ENCODE measurements at regions of chr22 and their contacts with region 1.

Region 1: DNA sequence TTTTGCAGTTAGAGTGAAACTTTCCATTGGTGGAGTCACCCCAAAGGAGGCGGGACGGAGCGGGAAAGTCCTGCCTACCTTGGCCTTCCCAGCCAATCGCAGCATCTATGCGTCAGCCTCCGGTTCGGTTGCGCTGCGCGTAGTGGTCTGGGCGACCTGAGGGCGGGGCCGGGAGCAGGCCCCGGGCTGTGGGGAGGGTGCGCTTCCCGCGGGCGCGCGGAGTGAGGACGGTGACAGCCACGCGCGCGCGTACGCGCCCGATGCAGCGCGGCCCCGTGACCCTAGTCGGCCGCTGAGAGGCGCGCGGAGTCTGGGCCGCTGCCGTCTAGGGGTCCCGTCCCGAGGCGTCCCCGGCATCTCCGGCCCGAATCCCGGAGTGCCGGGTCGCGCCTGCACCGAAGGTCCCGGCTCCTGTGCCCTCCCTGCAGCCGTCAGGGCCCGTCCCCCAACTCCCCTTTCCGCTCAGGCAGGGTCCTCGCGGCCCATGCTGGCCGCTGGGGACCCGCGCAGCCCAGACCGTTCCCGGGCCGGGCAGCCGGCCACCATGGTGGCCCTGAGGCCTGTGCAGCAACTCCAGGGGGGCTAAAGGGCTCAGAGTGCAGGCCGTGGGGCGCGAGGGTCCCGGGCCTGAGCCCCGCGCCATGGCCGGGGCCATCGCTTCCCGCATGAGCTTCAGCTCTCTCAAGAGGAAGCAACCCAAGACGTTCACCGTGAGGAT is at the start of gene NF2:
- DNase-seq: peak; percentile 99
- H3K4me3 ChIP-seq: peak within 1 kb of the TSS; percentile 75 to 77
- H3K27ac ChIP-seq: peak within 1 kb of the TSS; percentile 73 to 79
- H3K4me1 ChIP-seq: peaks cover 3 to 11% of the 10 kb centered on the region in 2 experiments; a peak in 2 of 4 replicates
- H3K27me3 ChIP-seq: no peaks in the 10 kb centered on the region
- CTCF ChIP-seq: peak; percentile 20; the same call in 1 of the 2 replicates
- EP300 ChIP-seq: peak in 1 of 2 experiments; percentile 25; a peak in 1 of 4 replicates
- RAD21 ChIP-seq: no peak
- polyA plus RNA-seq, gene NF2: 43.8 and 44.1 TPM in 2 replicates

Region 2: GRCh38 chr22:29587938-29588699 is 15.4 kb before region 1 on chr22:
- CTCF ChIA-PET with region 1: interaction called, 27 read pairs
- POLR2A ChIA-PET with region 1: no interaction called
- DNase-seq: no peak
- H3K4me3 ChIP-seq: no peak overlapping the region
- H3K27ac ChIP-seq: peak overlapping the region in 1 of 2 experiments; percentile 34; a peak in 1 of 4 replicates
- H3K4me1 ChIP-seq: no peaks in the 10 kb centered on the region
- H3K27me3 ChIP-seq: no peaks in the 10 kb centered on the region
- CTCF ChIP-seq: no peak
- EP300 ChIP-seq: 0 out of 4 replicates have a peak, but pooled peaks of 1 of the 2 experiments have one; percentile 3
- RAD21 ChIP-seq: no peak

Measured in SK-N-SH (cell line).